HEK293T (cell line): ENCODE measurements at regions of chr5 and their contacts with region 1.

Region 1: DNA sequence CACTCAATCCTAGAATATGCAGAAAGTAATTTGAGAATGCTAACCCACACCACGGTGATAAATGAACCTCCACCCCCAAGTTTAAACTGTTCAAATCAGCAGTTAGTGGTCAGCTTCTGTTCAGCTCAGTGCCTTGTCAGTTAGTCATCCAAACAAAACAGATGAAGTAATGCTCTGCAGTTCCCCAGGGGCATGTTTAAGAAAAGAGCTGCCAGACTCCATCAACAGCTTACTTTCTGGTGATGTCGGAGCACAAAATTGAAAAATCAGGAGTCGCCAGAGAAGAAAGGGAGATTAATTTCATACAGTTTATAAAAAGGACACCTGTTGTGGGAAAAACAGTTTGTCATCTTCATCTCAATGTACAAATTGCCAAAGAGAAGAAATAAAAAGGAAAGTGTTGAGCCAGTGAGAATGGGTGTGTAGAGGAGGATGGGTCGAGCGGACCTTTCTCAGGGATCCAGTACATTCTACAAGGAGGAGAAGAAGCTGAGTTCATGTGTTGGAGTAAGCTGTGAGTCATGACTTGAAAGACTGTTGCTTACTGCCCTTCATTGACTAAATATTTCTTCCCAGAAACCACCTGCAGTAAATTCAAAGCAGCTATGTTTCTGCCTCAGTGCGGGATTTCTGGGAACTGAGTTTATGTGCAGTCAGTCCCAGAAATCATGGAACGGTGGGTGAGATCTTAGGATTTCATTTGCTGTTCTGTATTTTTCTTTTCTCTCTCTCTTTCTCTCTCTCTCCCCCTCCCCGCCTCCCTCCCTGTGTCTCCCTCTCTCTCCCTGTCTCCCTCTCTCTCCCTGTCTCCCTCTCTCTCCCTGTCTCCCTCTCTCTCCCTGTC is 13.7 kb downstream of the TRIO start:
- DNase-seq: peak; percentile 67

Region 2: GRCh38 chr5:14142827-14143548 is 13.9 kb before region 1 on chr5 and contains the start of gene TRIO:
- CTCF ChIA-PET with region 1: interaction called, 3 read pairs
- POLR2A ChIA-PET with region 1: interaction called, 29 read pairs
- DNase-seq: peak; percentile 91

Region 3: GRCh38 chr5:14168144-14168792 is 11.4 kb after region 1 on chr5:
- CTCF ChIA-PET with region 1: interaction called, 3 read pairs
- POLR2A ChIA-PET with region 1: interaction called, 13 read pairs
- DNase-seq: no peak